ENCODE measurements at regions of chr13 and their contacts with region 1.

Region 1: GRCh38 chr13:73288596-73288995 is 229.8 kb downstream of the KLF5 start:
- DNase-seq: no peak
- H3K4me3 ChIP-seq: no peak overlapping the region
- H3K27ac ChIP-seq: peak overlapping the region in 3 of 4 donors; percentile 31 to 62 (median 50)
- H3K4me1 ChIP-seq: peaks cover 0 to 19% (median 10%) of the 10 kb centered on the region in 4 donors
- H3K27me3 ChIP-seq: no peaks in the 10 kb centered on the region
- CTCF ChIP-seq: no peak
- EP300 ChIP-seq: no peak
- POLR2A ChIP-seq: no peak

Region 2: GRCh38 chr13:73000027-73000674 is 288.4 kb before region 1 on chr13:
- in situ Hi-C with region 1: no loop called
- intact Hi-C with region 1: no loop called
- DNase-seq: no peak
- H3K4me3 ChIP-seq: no peak overlapping the region
- H3K27ac ChIP-seq: no peak overlapping the region
- H3K4me1 ChIP-seq: peaks cover 0 to 7% (median 0%) of the 10 kb centered on the region in 4 donors
- H3K27me3 ChIP-seq: no peaks in the 10 kb centered on the region
- CTCF ChIP-seq: no peak
- EP300 ChIP-seq: no peak
- POLR2A ChIP-seq: no peak

Region 3: GRCh38 chr13:73278186-73278585 is 10.4 kb before region 1 on chr13:
- in situ Hi-C with region 1: no loop called
- intact Hi-C with region 1: loop called (anchors 1 kb)
- DNase-seq: no peak
- H3K4me3 ChIP-seq: no peak overlapping the region
- H3K27ac ChIP-seq: no peak overlapping the region
- H3K4me1 ChIP-seq: no peaks in the 10 kb centered on the region
- H3K27me3 ChIP-seq: no peaks in the 10 kb centered on the region
- CTCF ChIP-seq: no peak
- EP300 ChIP-seq: no peak
- POLR2A ChIP-seq: no peak

Region 4: GRCh38 chr13:73556902-73557301 is 268.3 kb after region 1 on chr13:
- in situ Hi-C with region 1: no loop called
- intact Hi-C with region 1: no loop called
- DNase-seq: no peak
- H3K4me3 ChIP-seq: no peak overlapping the region
- H3K27ac ChIP-seq: no peak overlapping the region
- H3K4me1 ChIP-seq: no peaks in the 10 kb centered on the region
- H3K27me3 ChIP-seq: no peaks in the 10 kb centered on the region
- CTCF ChIP-seq: no peak
- EP300 ChIP-seq: no peak
- POLR2A ChIP-seq: no peak

Region 5: GRCh38 chr13:74305876-74306275 is 1017.3 kb after region 1 on chr13:
- in situ Hi-C with region 1: no loop called
- intact Hi-C with region 1: no loop called
- DNase-seq: no peak
- H3K4me3 ChIP-seq: no peak overlapping the region
- H3K27ac ChIP-seq: no peak overlapping the region
- H3K4me1 ChIP-seq: peaks cover 0 to 9% (median 0%) of the 10 kb centered on the region in 4 donors
- H3K27me3 ChIP-seq: no peaks in the 10 kb centered on the region
- CTCF ChIP-seq: no peak
- EP300 ChIP-seq: no peak
- POLR2A ChIP-seq: no peak